ENCODE measurements at regions of chr5 and their contacts with region 1.

Region 1: GRCh38 chr5:73081093-73081492 is 39.3 kb upstream of the TMEM171 start:
- DNase-seq: no peak
- H3K4me3 ChIP-seq: no peak overlapping the region
- H3K27ac ChIP-seq: no peak overlapping the region
- H3K4me1 ChIP-seq: no peaks in the 10 kb centered on the region
- H3K27me3 ChIP-seq: no peaks in the 10 kb centered on the region
- CTCF ChIP-seq: no peak
- EP300 ChIP-seq: no peak
- POLR2A ChIP-seq: no peak

Region 2: DNA sequence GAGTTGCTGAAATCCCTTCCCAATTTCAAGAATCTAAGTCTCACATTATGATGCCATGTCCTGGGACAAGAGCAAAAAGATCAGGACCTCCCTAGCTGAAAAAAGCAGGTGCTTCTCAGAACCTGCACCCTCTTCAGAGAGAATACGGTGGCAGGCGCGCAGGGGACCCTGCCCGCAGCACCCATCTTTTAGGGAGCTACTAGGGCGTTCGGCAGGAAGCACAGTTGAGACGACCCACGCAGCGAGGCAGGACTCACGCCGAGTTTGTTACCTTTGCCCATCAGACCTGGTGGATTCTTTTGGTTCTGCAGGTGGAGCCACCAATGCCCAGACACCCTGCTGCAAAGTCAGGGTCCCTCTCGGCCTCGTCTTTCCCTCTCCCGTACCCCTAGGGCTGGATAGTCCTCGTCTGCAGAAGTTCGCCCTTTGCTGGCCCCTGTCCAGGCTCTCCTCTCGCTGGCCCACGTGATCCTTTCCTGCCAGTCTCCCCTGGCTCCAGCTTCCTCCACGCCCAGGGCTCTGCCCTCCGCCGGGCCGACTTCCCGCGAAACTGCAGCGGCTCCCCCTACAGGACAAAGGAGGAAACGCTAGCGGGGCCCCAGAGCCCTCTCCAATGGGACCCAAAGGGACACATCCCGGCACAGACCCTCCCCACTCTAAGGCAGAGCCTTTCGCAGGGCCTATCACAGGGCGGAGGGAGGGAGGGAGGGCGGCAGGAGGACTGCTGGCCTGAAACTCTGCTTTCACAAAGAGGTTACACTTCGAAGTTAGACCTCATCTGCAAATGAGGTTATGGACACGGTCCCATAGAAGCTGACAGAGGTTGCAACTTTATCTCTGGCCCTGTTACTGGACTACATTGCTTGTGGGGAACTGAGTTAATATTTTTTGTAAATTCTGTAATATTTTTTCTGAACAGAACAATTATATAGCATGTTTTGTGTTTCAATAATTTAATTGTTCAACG is 120.7 kb after region 1 on chr5:
- intact Hi-C with region 1: loop called (anchors 5 kb)
- DNase-seq: peak; percentile 91
- H3K4me3 ChIP-seq: no peak overlapping the region
- H3K27ac ChIP-seq: no peak overlapping the region
- H3K4me1 ChIP-seq: peaks cover 5 to 8% (median 7%) of the 10 kb centered on the region in 4 donors
- H3K27me3 ChIP-seq: peaks cover 0 to 32% (median 0%) of the 10 kb centered on the region in 4 donors
- CTCF ChIP-seq: peak; percentile 60 to 81 (median 67)
- EP300 ChIP-seq: no peak
- POLR2A ChIP-seq: no peak